ENCODE measurements at regions of chr1 and their contacts with region 1.

Region 1: GRCh38 chr1:39609618-39610331 is 29.7 kb downstream of the HEYL start:
- DNase-seq: peak; percentile 90
- ATAC-seq: peak; percentile 94

Region 2: DNA sequence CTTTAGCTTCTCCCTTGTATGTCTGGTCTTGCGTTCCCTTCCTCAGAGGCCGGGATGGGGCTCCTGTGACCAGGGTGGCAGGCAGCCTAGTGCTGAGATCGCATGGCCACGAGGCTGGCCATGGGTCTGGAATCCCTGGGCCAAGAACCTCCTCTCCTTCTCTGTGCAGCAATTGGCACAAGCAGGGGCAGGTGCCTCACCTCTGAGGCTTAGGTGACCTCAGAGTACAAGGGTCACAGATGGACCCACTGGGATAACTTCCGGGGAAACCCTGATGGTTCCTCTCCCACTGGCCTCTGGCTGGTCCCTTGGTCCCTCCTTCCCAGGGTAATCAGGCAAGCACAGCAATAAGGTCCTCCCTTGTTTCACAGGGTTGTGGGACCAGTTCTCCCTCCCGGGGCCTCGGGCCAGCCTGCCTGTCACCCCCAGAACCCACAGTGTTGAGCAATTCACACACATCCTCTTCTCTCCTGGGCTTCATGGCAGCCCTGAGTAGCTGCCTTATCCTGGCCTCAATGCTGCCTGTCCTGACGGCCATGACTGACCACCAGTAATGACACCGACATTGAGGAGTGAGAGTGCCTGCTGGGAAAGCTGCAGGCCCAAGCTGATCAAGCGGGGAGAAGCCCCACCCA is 79.8 kb before region 1 on chr1:
- intact Hi-C with region 1: no loop called
- DNase-seq: no peak
- ATAC-seq: no peak

Region 3: GRCh38 chr1:39653546-39654031 is 43.8 kb after region 1 on chr1:
- intact Hi-C with region 1: loop called (anchors 1 kb)
- DNase-seq: peak; percentile 88
- ATAC-seq: peak; percentile 65

Measured in Right ventricle myocardium inferior (tissue), 1 donor.